ENCODE measurements at regions of chr12 and their contacts with region 1.

Region 1: DNA sequence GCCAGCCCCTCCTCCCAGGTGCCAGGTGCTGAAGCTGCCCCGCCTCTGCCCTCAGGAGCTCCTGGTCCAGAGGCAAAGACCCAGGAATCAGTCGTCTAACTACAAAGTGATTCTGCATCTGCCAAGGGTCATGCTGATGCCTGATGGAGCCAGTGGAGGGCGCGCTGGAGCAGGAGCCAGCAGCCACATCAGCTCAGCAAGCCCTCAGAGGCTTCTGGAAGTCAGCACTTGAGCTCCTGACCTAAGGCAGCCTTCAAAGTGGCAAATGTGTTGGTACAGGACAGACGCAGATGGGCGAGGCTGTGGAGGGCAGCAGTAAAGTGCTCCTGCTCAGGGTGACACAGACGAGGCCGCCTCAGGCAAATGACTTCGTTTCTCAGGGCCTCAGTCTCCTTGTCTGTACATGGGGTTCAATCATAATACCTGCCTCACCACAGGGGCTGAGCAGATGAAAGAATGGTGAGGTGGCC is 10.9 kb downstream of the C12orf43 start:
- DNase-seq: peak; percentile 8
- ATAC-seq: peak; percentile 77
- H3K4me3 ChIP-seq: no peak overlapping the region
- H3K27ac ChIP-seq: no peak overlapping the region
- H3K4me1 ChIP-seq: no peaks in the 10 kb centered on the region
- H3K27me3 ChIP-seq: no peaks in the 10 kb centered on the region
- CTCF ChIP-seq: peak; percentile 90

Region 2: DNA sequence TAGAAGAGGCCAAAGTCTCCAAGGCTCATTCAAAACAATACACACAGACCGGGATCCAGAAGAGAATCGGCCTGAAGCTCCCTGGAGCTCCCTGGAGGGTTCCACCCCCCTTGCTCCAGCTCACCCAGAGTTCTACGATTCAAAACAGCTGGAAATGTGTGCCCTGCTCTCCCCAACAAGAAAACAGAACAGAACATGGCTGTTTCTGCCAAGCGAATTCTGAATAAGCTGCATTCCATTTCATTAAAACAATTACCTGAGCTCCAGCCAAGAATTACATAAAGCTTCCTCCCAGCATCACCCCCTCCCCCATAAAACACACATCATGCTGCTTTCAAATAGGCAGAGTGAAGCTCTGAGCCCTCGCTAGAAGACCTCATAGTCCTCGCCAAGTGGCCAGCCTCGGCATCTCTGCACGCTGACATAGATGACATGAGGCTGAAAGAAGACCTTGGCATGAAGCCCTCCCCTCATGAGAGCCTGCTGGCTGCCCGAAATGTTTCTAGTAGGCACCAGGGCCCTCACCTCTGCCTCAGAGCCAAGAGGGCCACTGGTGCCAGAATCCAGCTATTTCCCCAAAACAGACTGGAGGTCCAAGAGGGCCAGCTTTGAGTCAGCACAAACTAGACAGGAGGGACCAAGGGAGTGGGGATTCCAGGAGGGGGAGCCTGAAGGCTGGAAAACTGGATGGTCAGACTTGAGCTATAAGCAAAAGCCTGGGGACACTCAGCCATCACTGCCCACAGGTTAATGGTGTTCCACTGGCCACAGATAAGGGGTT is 748.1 kb before region 1 on chr12:
- CTCF ChIA-PET with region 1: interaction called, 11 read pairs
- POLR2A ChIA-PET with region 1: no interaction called
- in situ Hi-C with region 1: no loop called
- intact Hi-C with region 1: no loop called
- DNase-seq: no peak
- ATAC-seq: peak; percentile 48
- H3K4me3 ChIP-seq: peak overlapping the region in 1 of 2 experiments; percentile 3; a peak in 2 of 4 replicates
- H3K27ac ChIP-seq: peak overlapping the region; percentile 100
- H3K4me1 ChIP-seq: peaks cover 96% of the 10 kb centered on the region
- H3K27me3 ChIP-seq: no peaks in the 10 kb centered on the region
- CTCF ChIP-seq: no peak

Region 3: GRCh38 chr12:120820885-120821510 is 184.4 kb before region 1 on chr12:
- CTCF ChIA-PET with region 1: no interaction called
- POLR2A ChIA-PET with region 1: no interaction called
- in situ Hi-C with region 1: no loop called
- intact Hi-C with region 1: no loop called
- DNase-seq: no peak
- ATAC-seq: no peak
- H3K4me3 ChIP-seq: no peak overlapping the region
- H3K27ac ChIP-seq: no peak overlapping the region
- H3K4me1 ChIP-seq: no peaks in the 10 kb centered on the region
- H3K27me3 ChIP-seq: no peaks in the 10 kb centered on the region
- CTCF ChIP-seq: no peak

Region 4: DNA sequence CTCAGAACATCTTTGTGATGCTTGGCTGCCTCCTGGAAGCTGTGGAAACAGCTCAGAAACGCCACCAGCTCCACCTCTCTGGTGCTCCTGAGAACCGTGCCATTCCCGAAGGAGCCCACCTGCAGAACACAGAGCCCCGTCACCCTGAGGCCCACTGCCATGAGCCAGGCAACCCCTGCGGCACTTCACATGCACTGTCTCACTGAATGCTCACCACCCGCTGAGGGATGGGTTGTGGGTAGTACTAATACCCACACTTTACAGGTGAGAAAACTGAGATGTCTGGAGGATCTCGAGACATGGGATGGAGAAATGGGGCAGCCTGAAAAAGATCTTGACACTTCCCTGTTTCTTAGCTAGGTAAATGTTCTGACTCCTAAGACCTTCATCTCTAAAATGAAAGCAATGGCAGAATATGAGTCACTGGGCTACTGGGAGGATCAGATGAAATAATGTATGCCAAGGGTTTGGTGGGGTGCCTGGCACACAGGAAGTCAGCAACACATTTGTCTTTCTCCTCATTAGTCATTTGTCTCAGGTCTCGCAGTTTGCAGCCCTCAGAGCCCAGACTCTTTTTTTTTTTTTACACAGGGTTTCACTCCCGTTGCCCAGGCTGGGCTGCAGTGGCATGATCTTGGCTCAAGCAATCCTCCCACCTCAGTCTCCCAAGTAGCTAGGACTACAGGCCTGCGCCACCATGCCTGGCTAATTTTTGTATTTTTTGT is 28.4 kb after region 1 on chr12:
- CTCF ChIA-PET with region 1: no interaction called
- POLR2A ChIA-PET with region 1: no interaction called
- in situ Hi-C with region 1: no loop called
- intact Hi-C with region 1: no loop called
- DNase-seq: no peak
- ATAC-seq: peak; percentile 52; the same call in 1 of the 2 replicates
- H3K4me3 ChIP-seq: no peak overlapping the region
- H3K27ac ChIP-seq: no peak overlapping the region
- H3K4me1 ChIP-seq: no peaks in the 10 kb centered on the region
- H3K27me3 ChIP-seq: no peaks in the 10 kb centered on the region
- CTCF ChIP-seq: no peak

Region 5: DNA sequence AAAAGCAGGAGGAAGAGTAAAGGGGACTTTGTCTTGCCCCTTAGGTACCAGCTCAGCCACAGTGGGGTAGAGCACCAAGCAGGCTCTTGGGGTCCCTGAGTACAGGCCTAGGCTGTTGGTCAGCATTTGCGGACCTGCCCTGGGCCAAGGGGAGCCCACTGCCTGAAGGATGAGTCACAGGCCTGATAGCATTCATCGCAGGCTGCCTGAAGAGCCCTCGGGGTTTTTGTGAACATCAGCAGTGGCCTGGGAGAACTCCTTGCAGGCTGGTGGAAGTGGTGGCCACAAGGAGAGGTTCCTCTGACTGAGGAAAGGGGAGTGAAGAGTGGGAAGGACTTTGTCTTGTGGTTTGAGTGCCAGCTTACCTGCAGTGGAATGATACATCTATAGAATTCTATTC is 102.3 kb after region 1 on chr12:
- CTCF ChIA-PET with region 1: no interaction called
- POLR2A ChIA-PET with region 1: no interaction called
- in situ Hi-C with region 1: no loop called
- intact Hi-C with region 1: loop called (anchors 5 kb)
- DNase-seq: no peak
- ATAC-seq: no peak
- H3K4me3 ChIP-seq: no peak overlapping the region
- H3K27ac ChIP-seq: no peak overlapping the region
- H3K4me1 ChIP-seq: no peaks in the 10 kb centered on the region
- H3K27me3 ChIP-seq: no peaks in the 10 kb centered on the region
- CTCF ChIP-seq: no peak

Region 6: DNA sequence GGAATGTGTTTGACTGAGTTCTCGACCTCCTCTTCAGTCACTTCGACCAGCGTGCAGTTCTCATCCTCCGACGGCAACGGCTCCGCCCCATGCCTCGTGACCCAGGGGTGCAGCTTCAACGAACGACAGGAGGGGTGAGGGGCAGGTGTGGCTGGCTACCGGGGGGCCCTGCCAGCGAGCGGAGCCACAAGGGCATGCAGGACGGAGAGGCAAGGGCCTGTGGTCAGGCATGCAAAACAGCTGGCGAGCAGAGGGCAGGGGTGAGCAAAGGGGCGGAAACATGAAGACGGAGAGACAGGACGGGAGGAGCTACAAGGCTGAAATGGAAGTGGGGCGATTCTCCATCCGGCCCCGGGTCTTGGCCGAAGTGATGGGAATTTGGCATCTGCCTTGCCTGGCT is 243.2 kb after region 1 on chr12:
- CTCF ChIA-PET with region 1: no interaction called
- POLR2A ChIA-PET with region 1: no interaction called
- in situ Hi-C with region 1: no loop called
- intact Hi-C with region 1: no loop called
- DNase-seq: no peak
- ATAC-seq: no peak
- H3K4me3 ChIP-seq: no peak overlapping the region
- H3K27ac ChIP-seq: no peak overlapping the region
- H3K4me1 ChIP-seq: no peaks in the 10 kb centered on the region
- H3K27me3 ChIP-seq: no peaks in the 10 kb centered on the region
- CTCF ChIP-seq: no peak

Region 7: DNA sequence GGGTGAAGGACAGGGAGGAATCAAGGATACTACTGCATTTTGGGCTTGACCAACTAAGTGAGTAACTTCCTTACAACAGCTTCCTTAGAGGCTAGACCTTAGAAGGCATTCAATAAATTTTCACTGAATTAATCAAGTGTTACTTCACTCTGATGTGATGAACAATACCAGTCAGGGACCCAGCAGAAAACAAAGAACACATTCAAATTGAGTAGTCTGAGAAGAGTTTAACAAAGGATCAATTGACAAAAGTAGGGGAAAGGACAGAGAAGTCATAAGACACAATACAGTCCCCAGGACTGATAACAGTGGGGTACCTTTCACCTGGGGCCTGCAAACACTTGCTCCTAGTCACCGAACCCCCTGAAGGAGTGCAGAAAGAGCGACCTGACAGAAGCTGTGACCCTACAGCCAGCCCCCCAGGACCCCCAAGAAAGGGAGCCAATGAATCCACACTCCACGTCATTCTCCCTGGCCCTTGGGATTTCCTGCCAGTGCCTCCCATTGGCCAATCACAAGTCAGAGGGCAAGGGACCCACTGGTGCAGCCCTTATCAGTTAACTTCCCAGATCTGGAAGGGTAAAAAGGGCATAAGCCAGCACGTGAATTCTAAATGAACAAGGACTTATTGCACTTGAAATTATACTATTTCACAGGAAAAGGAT is 339.9 kb after region 1 on chr12:
- CTCF ChIA-PET with region 1: no interaction called
- POLR2A ChIA-PET with region 1: no interaction called
- in situ Hi-C with region 1: no loop called
- intact Hi-C with region 1: no loop called
- DNase-seq: no peak
- ATAC-seq: no peak
- H3K4me3 ChIP-seq: no peak overlapping the region
- H3K27ac ChIP-seq: no peak overlapping the region
- H3K4me1 ChIP-seq: peaks cover 3% of the 10 kb centered on the region; the same call in 1 of the 2 replicates
- H3K27me3 ChIP-seq: no peaks in the 10 kb centered on the region
- CTCF ChIP-seq: no peak